Esophagus muscularis mucosa (tissue), 4 donors: ENCODE measurements at regions of chr7 and their contacts with region 1.

Region 1: GRCh38 chr7:518630-519483 is 789 bp downstream of the PDGFA start:
- DNase-seq: peak; percentile 93
- H3K4me3 ChIP-seq: peak overlapping the region; percentile 65 to 89 (median 81)
- H3K27ac ChIP-seq: peak overlapping the region; percentile 90 to 95 (median 94)
- H3K4me1 ChIP-seq: peaks cover 54 to 86% (median 67%) of the 10 kb centered on the region in 4 donors
- H3K27me3 ChIP-seq: peaks cover 0 to 25% (median 0%) of the 10 kb centered on the region in 4 donors
- CTCF ChIP-seq: peak in 1 of 3 experiments; percentile 37
- EP300 ChIP-seq: no peak
- POLR2A ChIP-seq: peak; percentile 61

Region 2: DNA sequence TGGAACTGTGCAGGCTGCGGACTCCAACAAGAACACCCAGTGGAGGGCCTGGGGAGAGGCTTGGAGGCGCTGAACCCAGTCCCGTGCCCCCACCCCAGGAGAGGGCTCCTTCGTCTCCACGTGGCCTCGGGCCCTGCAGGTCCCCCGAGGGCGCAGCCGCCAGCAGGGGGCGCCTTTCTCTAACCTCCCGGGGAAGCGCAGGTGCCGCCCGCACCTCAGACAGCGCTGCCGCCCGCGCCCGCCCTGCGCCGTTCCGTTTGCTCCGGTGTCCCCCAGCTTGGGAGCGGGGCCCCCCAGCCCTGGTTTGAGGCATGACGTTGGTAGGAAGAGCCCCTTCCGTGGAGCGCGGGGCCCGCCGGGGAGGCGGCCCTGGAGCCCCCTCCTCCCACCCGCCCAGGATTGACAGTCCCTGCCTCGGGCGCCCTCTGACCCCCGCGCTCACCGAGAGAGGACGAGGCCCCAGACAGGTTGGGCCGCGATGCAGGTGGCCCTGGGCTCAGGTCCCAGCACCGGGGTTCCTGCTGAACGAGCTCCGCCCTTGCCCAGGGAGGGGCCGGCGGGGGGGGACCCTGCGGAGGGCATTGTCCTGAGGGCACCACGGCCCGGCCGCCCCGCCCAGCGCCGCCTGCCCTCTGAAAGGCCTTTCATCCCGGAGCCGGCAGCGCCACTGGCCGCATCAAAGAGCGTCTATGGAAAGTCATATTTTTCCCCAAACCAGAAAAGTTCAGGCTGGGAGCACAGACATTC is 186.0 kb before region 1 on chr7:
- intact Hi-C with region 1: loop called (anchors 2 kb)
- DNase-seq: no peak
- H3K4me3 ChIP-seq: peak overlapping the region; percentile 54 to 61 (median 56)
- H3K27ac ChIP-seq: peak overlapping the region; percentile 68 to 82 (median 78)
- H3K4me1 ChIP-seq: peaks cover 14 to 18% (median 17%) of the 10 kb centered on the region in 4 donors
- H3K27me3 ChIP-seq: no peaks in the 10 kb centered on the region
- CTCF ChIP-seq: peak; percentile 81 to 96 (median 93)
- EP300 ChIP-seq: no peak
- POLR2A ChIP-seq: no peak

Region 3: DNA sequence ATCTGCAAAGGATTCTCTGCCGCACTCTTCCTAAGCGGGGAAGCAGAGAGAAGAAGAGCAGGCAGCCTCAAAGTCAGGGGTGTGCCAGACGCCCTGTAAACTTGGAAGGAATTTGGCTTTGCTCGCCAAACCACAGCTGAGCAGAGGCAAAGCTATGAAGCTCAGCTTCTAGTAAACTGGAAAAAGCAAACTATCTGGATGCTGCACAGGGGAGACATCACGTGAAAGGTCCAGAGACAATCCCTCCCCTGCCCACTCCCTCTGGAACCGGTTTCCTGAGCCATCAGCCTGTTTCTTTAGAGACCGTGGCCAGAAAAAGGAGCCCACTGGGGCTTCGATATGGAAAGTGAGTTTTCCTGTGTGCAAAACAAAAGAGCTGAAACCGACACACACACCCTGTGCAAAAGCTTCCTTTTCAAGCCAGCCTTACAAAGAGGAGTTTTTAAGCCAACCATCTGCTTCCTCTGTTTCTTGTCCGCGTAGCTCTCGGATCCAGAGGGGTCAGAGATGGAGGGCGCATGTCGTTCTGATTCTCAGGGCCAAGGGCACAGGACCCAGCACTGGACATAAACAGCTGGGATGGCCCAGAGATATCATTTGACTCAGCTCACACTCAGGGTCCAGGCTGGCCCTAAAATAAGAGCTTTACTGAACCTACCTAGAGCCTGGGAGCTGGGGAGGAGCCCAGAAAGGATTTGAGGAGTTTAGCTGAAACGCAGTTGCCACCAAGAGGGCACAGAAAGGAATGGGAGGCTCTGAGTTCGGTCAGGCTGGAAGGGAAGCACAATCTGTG is 149.5 kb after region 1 on chr7:
- intact Hi-C with region 1: loop called (anchors 2 kb)
- DNase-seq: no peak
- H3K4me3 ChIP-seq: peak overlapping the region; percentile 8 to 26 (median 20)
- H3K27ac ChIP-seq: peak overlapping the region; percentile 77 to 84 (median 82)
- H3K4me1 ChIP-seq: peaks cover 44 to 56% (median 52%) of the 10 kb centered on the region in 4 donors
- H3K27me3 ChIP-seq: no peaks in the 10 kb centered on the region
- CTCF ChIP-seq: no peak
- EP300 ChIP-seq: no peak
- POLR2A ChIP-seq: no peak

Region 4: GRCh38 chr7:774161-775109 is 255.6 kb after region 1 on chr7:
- intact Hi-C with region 1: loop called (anchors 5 kb)
- DNase-seq: no peak
- H3K4me3 ChIP-seq: no peak overlapping the region
- H3K27ac ChIP-seq: peak overlapping the region in 1 of 4 donors; percentile 11
- H3K4me1 ChIP-seq: peaks cover 22 to 47% (median 40%) of the 10 kb centered on the region in 4 donors
- H3K27me3 ChIP-seq: no peaks in the 10 kb centered on the region
- CTCF ChIP-seq: peak in 2 of 3 experiments; percentile 94 to 96
- EP300 ChIP-seq: no peak
- POLR2A ChIP-seq: no peak